A673 (cell line): ENCODE measurements at regions of chr9 and their contacts with region 1.

Region 1: GRCh38 chr9:134443168-134444037 is 117.1 kb downstream of the RXRA start:
- DNase-seq: peak; percentile 90
- H3K4me3 ChIP-seq: no peak overlapping the region
- H3K27ac ChIP-seq: no peak overlapping the region
- H3K4me1 ChIP-seq: peaks cover 11% of the 10 kb centered on the region
- H3K27me3 ChIP-seq: no peaks in the 10 kb centered on the region
- CTCF ChIP-seq: peak; percentile 99

Region 2: DNA sequence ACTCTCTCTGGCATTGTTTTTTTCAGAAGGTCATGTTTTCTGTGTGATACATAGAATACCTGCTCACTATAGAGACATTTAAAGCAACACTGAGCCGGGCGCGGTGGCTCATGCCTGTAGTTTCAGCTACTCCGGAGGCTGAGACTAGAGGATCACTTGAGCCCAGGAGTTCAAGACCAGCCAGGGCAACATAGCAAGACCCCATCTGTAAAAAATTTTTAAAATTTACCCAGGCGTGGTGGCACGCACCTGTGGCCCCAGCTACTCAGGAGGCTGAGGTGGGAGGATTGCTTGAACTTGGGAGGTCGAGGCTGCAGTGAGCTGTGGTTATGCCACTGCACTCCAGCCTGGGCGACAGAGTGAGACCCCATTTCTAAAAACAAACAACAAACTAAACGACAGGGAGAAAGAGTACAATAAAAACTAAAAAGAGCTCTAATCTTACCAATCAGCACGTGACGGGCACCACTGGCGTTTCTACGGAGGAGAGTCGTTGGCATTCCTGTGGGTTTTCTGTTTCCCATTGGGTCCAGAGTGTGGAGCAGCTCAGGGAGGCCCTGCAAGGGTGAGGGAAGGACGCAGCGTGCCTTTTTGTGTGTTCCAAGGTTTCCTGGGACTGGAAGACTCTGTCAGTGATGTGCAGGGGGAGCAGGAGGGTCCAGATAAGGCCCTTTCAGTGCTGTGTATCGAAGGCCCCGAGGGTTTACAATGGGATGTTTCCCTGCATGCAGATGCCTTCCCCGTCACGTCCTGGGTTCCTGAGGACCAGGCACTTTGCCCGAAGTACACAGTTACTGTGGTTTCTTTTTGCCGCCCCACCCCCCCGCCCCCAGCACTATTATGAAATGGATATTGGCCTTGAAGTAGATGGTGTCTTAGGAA is 271.8 kb before region 1 on chr9:
- CTCF ChIA-PET with region 1: interaction called, 35 read pairs
- POLR2A ChIA-PET with region 1: no interaction called
- intact Hi-C with region 1: loop called (anchors 1 kb)
- DNase-seq: no peak
- H3K4me3 ChIP-seq: no peak overlapping the region
- H3K27ac ChIP-seq: no peak overlapping the region
- H3K4me1 ChIP-seq: peaks cover 11% of the 10 kb centered on the region
- H3K27me3 ChIP-seq: no peaks in the 10 kb centered on the region
- CTCF ChIP-seq: no peak